ENCODE measurements at regions of chr19 and their contacts with region 1.

Region 1: DNA sequence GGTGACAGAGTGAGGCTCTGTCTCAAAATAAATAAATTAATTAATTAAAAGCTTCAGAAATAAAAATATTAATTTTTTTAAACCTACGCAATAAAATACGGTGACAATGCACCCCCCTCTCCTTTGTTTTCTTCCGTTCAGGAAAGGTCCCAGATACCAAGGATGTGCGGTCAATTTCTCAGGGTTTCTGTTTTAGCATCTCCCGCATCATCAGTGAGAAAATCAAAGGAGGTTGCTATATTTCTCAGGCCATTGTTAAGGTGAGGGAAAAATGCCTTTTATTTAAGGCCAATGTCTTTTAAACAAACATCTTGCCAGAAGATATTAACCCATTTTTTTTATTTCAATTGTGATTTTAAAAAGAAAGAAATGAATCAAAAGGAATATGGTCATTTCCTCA is 111.7 kb downstream of the INSR start:
- DNase-seq: no peak

Region 2: GRCh38 chr19:7125221-7125620 is 57.3 kb before region 1 on chr19:
- intact Hi-C with region 1: no loop called
- DNase-seq: no peak

Region 3: GRCh38 chr19:7326105-7326877 is 143.8 kb after region 1 on chr19:
- intact Hi-C with region 1: loop called (anchors 1 kb)
- DNase-seq: no peak

Region 4: GRCh38 chr19:7333198-7334118 is 151.0 kb after region 1 on chr19:
- intact Hi-C with region 1: loop called (anchors 2 kb)
- DNase-seq: no peak

Measured in cardiac septum (tissue), 1 donor.